Psoas muscle (tissue), 8 donors: ENCODE measurements at regions of chr18 and their contacts with region 1.

Region 1: GRCh38 chr18:35513181-35513936 is 15.6 kb upstream of the INO80C start:
- DNase-seq: peak; percentile 31 to 74
- ATAC-seq: peak; percentile 87 to 97 (median 95)
- H3K4me3 ChIP-seq: no peak overlapping the region
- H3K27ac ChIP-seq: peak overlapping the region; percentile 67
- H3K4me1 ChIP-seq: peaks cover 21% of the 10 kb centered on the region
- H3K27me3 ChIP-seq: no peaks in the 10 kb centered on the region
- CTCF ChIP-seq: no peak

Region 2: DNA sequence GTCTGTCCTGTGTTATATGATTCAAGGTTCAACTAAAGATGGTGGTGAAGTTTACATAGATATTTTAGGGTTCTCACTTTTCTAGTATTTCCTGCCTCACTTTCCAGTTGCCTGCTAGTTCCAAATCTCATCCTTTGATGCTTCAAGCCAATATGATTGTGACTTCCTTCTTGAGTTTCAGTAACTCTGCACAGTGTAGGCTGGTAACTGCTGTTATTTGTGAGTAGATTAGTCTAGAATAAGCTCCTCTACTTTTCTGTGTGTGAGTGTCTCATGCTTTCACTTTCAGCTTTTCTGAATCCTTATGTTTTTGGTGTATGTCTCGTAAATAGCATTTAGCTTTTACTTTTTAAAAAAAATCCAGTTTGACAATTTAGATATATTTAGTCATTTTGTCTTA is 110.8 kb after region 1 on chr18:
- intact Hi-C with region 1: loop called in 1 of 2 experiments (anchors 10 kb)
- DNase-seq: no peak
- ATAC-seq: peak in 2 of 4 donors; percentile 36 to 42
- H3K4me3 ChIP-seq: no peak overlapping the region
- H3K27ac ChIP-seq: peak overlapping the region; percentile 62
- H3K4me1 ChIP-seq: peaks cover 56% of the 10 kb centered on the region
- H3K27me3 ChIP-seq: no peaks in the 10 kb centered on the region
- CTCF ChIP-seq: no peak